ENCODE measurements at regions of chr5 and their contacts with region 1.

Region 1: GRCh38 chr5:75482482-75482881 is 28.9 kb downstream of the CERT1 start:
- DNase-seq: no peak
- ATAC-seq: no peak
- H3K4me3 ChIP-seq: no peak overlapping the region
- H3K27ac ChIP-seq: no peak overlapping the region
- H3K4me1 ChIP-seq: no peaks in the 10 kb centered on the region
- H3K27me3 ChIP-seq: no peaks in the 10 kb centered on the region
- CTCF ChIP-seq: no peak

Region 2: DNA sequence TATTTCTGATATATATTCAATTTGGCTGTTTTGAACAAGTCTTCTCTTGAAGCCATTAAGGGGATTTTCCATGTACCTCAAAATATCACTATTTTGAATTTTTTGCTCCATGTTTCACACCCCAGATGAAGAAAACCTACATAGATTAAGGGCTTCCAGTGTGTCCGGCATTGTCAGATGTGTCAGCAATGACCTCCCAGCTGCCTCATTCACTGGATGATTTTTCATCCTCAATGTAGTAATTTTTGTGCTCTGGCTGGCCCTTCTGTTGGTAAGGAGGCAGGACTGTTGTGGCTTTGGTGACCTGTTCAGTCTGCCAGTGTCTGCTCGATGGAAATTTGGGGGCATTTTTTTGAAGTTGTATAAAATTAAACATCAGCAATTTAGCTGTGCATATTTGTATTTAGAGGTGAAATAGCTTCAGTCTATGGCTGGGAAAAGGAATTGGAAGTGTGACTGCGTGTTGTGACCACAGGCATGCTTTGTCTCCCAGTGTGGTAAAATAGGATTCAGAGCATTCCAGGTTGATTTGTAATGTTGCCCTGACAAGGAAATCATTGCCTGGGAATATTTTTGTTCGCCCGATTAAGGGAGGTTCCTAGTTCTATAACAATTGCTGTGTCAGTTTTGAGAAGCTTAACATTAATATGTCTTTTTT is 1544.1 kb before region 1 on chr5:
- CTCF ChIA-PET with region 1: no interaction called
- POLR2A ChIA-PET with region 1: interaction called, 17 read pairs
- in situ Hi-C with region 1: no loop called
- intact Hi-C with region 1: no loop called
- DNase-seq: peak; percentile 33
- ATAC-seq: peak; percentile 82
- H3K4me3 ChIP-seq: no peak overlapping the region
- H3K27ac ChIP-seq: no peak overlapping the region
- H3K4me1 ChIP-seq: no peaks in the 10 kb centered on the region
- H3K27me3 ChIP-seq: no peaks in the 10 kb centered on the region
- CTCF ChIP-seq: no peak

Region 3: DNA sequence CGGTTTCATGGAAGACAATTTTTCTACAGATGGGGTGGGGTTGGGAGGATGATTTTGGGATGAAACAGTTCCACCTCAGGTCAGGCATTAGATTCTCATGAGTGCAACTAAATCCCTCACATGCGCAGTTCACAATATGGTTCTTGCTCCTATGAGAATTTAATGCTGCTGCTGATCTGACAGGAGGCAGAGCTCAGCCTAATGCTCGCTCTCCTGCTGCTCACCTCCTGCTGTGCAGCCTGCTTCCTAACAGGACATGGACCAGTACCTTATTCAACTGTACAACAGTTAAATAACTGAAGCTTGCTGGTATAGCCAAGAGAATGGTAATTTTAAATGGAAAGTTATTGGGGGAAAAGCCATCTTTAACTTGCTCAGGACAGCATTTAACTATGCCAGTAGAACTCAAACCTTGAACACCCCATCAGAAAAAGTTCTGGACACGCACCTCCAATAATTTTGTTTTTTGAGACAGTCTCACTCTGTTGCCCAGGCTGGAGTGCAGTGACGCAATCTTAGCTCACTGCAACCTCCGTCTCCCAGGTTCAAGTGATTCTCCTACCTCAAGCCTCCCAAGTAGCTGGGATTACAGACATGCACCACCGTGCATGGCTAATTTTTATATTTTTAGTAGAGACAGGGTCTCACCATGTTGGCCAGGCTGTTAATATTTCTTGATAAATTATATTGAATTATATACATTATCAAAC is 117.8 kb before region 1 on chr5:
- CTCF ChIA-PET with region 1: interaction called, 10 read pairs
- POLR2A ChIA-PET with region 1: no interaction called
- in situ Hi-C with region 1: no loop called
- intact Hi-C with region 1: no loop called
- DNase-seq: no peak
- ATAC-seq: no peak
- H3K4me3 ChIP-seq: no peak overlapping the region
- H3K27ac ChIP-seq: no peak overlapping the region
- H3K4me1 ChIP-seq: no peaks in the 10 kb centered on the region
- H3K27me3 ChIP-seq: no peaks in the 10 kb centered on the region
- CTCF ChIP-seq: no peak